Activated B cell treated with CpG ODN at 0.5 μM for 24 hours (primary cell): ENCODE measurements at regions of chr11 and their contacts with region 1.

Region 1: GRCh38 chr11:33039274-33040032 is at the start of gene TCP11L1:
- DNase-seq: peak; percentile 77
- ATAC-seq: peak; percentile 85
- H3K4me3 Mint-ChIP-seq: peak within 1 kb of the TSS; percentile 95
- H3K27ac Mint-ChIP-seq: peak within 1 kb of the TSS; percentile 95
- H3K4me1 Mint-ChIP-seq: peaks cover 13% of the 10 kb centered on the region
- H3K27me3 Mint-ChIP-seq: peaks cover 8% of the 10 kb centered on the region
- CTCF ChIP-seq: no peak
- total RNA-seq, gene TCP11L1: 13.5 and 17.7 TPM in 2 replicates

Region 2: DNA sequence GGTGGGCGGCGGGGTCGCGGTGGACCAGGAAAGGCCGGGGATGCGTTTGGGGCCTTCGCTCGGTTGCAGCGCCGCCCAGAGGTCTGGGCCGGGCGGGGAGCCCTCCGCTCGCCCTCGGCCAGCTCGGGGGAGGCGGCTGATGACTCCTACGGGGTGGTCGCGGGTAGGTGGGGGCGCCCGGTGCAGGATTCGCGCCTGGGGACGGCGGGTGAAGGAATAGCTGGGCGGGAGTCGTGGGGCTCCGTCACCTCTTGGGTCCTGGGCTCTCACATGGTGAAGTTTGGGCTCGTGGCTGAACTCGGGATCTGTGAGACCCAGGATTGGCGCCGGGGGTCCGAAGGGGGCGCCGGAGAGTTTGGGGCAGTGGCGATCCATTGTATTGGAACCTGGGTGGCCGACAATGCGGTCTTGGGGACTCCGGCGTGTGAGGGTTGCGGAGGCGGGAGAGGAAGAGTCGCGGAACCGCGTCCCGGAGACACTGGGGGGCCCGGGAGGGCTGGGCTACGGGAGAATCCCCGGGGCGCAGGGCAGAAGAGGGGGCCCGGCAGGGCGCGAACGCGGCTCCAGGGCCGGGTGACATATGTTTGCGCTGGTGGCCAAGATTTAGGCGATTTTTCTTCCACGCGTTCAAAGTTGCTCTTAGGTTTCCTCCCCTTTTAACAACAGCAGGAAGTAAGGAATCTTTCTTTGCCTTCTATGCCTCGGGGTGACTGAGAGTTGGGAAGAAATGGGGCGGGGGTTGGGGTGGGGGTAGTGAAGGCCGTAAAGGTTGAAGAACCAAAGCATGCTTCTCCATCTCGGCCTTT is 145.9 kb before region 1 on chr11:
- CTCF ChIA-PET with region 1: no interaction called
- POLR2A ChIA-PET with region 1: interaction called, 12 read pairs
- intact Hi-C with region 1: loop called (anchors 1 kb)
- DNase-seq: peak; percentile 65
- ATAC-seq: peak; percentile 51
- H3K4me3 Mint-ChIP-seq: peak overlapping the region; percentile 94
- H3K27ac Mint-ChIP-seq: peak overlapping the region; percentile 82
- H3K4me1 Mint-ChIP-seq: peaks cover 30% of the 10 kb centered on the region
- H3K27me3 Mint-ChIP-seq: no peaks in the 10 kb centered on the region
- CTCF ChIP-seq: no peak

Region 3: GRCh38 chr11:33015621-33016551 is 23.6 kb before region 1 on chr11 and contains the start of gene DEPDC7:
- CTCF ChIA-PET with region 1: no interaction called
- POLR2A ChIA-PET with region 1: interaction called, 6 read pairs
- intact Hi-C with region 1: loop called (anchors 1 kb)
- DNase-seq: peak; percentile 66
- ATAC-seq: peak; percentile 84
- H3K4me3 Mint-ChIP-seq: peak within 1 kb of the TSS; percentile 82
- H3K27ac Mint-ChIP-seq: no peak within 1 kb of the TSS
- H3K4me1 Mint-ChIP-seq: peaks cover 18% of the 10 kb centered on the region
- H3K27me3 Mint-ChIP-seq: peaks cover 41% of the 10 kb centered on the region
- CTCF ChIP-seq: no peak
- total RNA-seq, gene DEPDC7: 0.27 TPM in 1 of 2 replicates, not detected in the other

Region 4: GRCh38 chr11:33072465-33072864 is 33.0 kb after region 1 on chr11:
- CTCF ChIA-PET with region 1: no interaction called
- POLR2A ChIA-PET with region 1: no interaction called
- intact Hi-C with region 1: no loop called
- DNase-seq: no peak
- ATAC-seq: no peak
- H3K4me3 Mint-ChIP-seq: no peak overlapping the region
- H3K27ac Mint-ChIP-seq: no peak overlapping the region
- H3K4me1 Mint-ChIP-seq: no peaks in the 10 kb centered on the region
- H3K27me3 Mint-ChIP-seq: no peaks in the 10 kb centered on the region
- CTCF ChIP-seq: no peak

Region 5: DNA sequence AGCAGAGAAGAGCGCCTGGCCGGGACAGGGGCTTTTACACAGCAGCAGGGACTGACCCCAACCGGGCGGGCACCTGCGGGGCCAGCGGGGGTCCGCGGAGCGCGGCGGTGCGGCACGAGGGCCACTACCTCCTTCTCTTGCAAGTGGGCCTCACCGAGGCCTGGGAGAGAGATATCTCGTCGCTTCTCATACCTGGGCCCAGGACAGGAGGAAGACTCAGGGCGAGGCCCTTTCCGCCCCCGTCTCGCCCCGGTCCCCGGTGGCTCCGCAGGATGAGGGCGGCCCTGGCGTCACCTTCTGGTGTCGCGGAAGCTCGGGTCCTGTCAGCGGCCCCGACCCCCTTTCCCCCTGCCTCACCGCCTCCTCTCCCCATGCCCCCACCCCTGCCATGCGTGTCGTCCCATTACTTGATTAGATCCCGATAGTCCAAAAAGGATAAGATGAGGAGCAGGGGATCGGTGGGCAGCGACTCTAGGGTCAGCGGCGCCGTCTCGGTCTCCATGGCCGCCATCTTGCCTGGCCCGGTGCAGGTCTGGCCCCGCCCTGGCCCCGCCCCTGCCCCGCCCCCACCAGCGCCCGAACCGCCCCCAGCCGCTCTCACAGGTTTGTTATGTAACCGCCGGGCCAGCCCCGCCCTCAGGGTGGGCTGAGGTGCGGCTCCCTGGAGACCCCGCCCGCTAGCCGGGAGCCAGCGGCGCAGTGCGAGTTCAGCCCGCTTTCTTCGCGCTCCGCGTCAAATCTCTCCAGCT is 734.7 kb after region 1 on chr11 and contains the start of gene FBXO3:
- CTCF ChIA-PET with region 1: no interaction called
- POLR2A ChIA-PET with region 1: no interaction called
- intact Hi-C with region 1: loop called (anchors 1 kb)
- DNase-seq: peak; percentile 80
- ATAC-seq: peak; percentile 92
- H3K4me3 Mint-ChIP-seq: peak within 1 kb of the TSS; percentile 96
- H3K27ac Mint-ChIP-seq: peak within 1 kb of the TSS; percentile 94
- H3K4me1 Mint-ChIP-seq: peaks cover 38% of the 10 kb centered on the region
- H3K27me3 Mint-ChIP-seq: peaks cover 15% of the 10 kb centered on the region
- CTCF ChIP-seq: no peak
- total RNA-seq, gene FBXO3: 22.3 and 23.5 TPM in 2 replicates